ENCODE measurements at regions of chr14 and their contacts with region 1.

Region 1: GRCh38 chr14:77139540-77140358 is 1.8 kb downstream of the ZDHHC22 start:
- DNase-seq: peak; percentile 79
- ATAC-seq: peak; percentile 92
- H3K4me3 Mint-ChIP-seq: no peak overlapping the region
- H3K27ac Mint-ChIP-seq: no peak overlapping the region
- H3K4me1 Mint-ChIP-seq: peaks cover 15% of the 10 kb centered on the region
- H3K27me3 Mint-ChIP-seq: peaks cover 64% of the 10 kb centered on the region

Region 2: GRCh38 chr14:77124345-77125280 is 15.1 kb before region 1 on chr14:
- CTCF ChIA-PET with region 1: interaction called, 46 read pairs
- POLR2A ChIA-PET with region 1: no interaction called
- intact Hi-C with region 1: no loop called
- DNase-seq: peak; percentile 77
- ATAC-seq: peak; percentile 77
- H3K4me3 Mint-ChIP-seq: peak overlapping the region; percentile 68
- H3K27ac Mint-ChIP-seq: peak overlapping the region; percentile 55
- H3K4me1 Mint-ChIP-seq: peaks cover 37% of the 10 kb centered on the region
- H3K27me3 Mint-ChIP-seq: peaks cover 9% of the 10 kb centered on the region

Region 3: GRCh38 chr14:77151918-77152588 is 12.3 kb after region 1 on chr14:
- CTCF ChIA-PET with region 1: interaction called, 11 read pairs
- POLR2A ChIA-PET with region 1: no interaction called
- intact Hi-C with region 1: no loop called
- DNase-seq: no peak
- ATAC-seq: peak; percentile 69
- H3K4me3 Mint-ChIP-seq: no peak overlapping the region
- H3K27ac Mint-ChIP-seq: no peak overlapping the region
- H3K4me1 Mint-ChIP-seq: no peaks in the 10 kb centered on the region
- H3K27me3 Mint-ChIP-seq: peaks cover 34% of the 10 kb centered on the region

Region 4: DNA sequence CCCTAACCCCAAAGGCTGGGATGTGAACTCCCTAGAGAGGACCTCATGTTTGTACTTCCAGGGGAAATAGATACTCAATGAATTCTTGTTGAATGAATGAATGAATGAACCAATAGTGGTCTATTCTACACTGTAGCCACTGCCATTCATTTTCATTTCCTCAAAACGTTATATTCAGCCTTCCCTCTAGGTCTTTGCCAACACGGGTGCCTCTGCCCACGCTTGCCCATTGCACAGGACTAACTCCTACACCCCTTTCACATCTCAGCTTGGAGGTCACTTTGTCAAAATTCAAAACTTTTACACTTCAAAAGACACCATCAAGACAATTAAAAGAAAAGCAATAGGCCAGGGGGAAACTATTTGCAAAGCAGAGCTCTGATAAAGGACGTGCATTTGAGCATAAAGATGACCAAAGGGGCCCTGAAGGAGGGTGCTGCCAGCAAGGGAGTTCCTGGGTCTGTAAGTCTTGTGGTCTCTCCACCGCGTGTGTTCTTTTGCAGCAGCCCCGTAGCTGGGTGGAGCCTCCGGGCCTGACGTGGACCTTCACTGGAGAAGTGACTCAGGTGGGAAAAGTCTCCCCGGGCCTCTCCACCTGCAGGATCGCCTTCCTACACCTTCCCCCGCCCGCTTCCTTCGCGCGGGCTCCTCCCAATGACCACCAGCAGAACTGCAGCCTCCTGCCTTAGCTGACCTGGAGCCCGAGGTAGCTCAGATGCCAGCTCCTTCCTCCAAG is 73.4 kb after region 1 on chr14:
- CTCF ChIA-PET with region 1: interaction called, 7 read pairs
- POLR2A ChIA-PET with region 1: no interaction called
- intact Hi-C with region 1: loop called in 1 of 2 experiments (anchors 1 kb)
- DNase-seq: peak; percentile 73
- ATAC-seq: peak; percentile 74
- H3K4me3 Mint-ChIP-seq: no peak overlapping the region
- H3K27ac Mint-ChIP-seq: no peak overlapping the region
- H3K4me1 Mint-ChIP-seq: no peaks in the 10 kb centered on the region
- H3K27me3 Mint-ChIP-seq: peaks cover 18% of the 10 kb centered on the region

Region 5: GRCh38 chr14:77638771-77639171 is 499.0 kb after region 1 on chr14:
- CTCF ChIA-PET with region 1: no interaction called
- POLR2A ChIA-PET with region 1: no interaction called
- intact Hi-C with region 1: no loop called
- DNase-seq: no peak
- ATAC-seq: no peak
- H3K4me3 Mint-ChIP-seq: no peak overlapping the region
- H3K27ac Mint-ChIP-seq: no peak overlapping the region
- H3K4me1 Mint-ChIP-seq: peaks cover 16% of the 10 kb centered on the region
- H3K27me3 Mint-ChIP-seq: no peaks in the 10 kb centered on the region